ENCODE measurements at regions of chr3 and their contacts with region 1.

Region 1: GRCh38 chr3:112043603-112044201 is 9.2 kb downstream of the TMPRSS7 start:
- DNase-seq: peak; percentile 46 to 68
- H3K4me3 ChIP-seq: peak overlapping the region; percentile 3; the same call in 1 of the 2 replicates
- H3K27ac ChIP-seq: no peak overlapping the region
- H3K4me1 ChIP-seq: no peaks in the 10 kb centered on the region
- H3K27me3 ChIP-seq: no peaks in the 10 kb centered on the region
- CTCF ChIP-seq: peak; percentile 100

Region 2: DNA sequence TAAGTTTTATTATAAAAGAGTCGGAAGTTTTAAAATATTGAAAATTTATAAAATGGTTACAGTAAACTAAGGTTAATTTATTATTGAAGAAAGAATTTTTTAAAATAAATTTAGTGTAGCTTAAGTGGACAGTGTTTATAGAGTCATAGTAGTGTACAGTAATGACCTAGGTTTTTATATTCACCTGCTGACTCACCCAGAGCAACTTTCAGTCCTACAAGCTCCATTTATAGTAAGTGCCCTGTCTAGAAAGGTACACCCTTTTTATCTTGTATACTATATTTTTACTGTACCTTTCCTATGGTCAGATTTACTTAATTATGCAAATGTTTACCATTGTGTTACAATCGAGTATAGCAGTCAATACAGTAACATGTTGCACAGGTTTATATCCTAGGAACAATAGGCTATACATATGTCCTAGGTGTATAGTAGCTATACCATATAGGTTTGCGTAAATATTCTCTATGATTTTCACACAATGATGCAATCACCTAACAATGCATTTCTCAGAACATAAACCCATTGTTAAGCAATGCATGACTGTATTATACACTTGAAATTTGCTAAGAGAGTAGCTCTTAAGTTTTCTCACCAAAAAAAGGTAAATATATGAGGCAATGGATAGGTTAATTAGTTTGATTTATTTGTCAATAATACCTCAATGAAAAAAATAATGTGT is 608.6 kb before region 1 on chr3:
- CTCF ChIA-PET with region 1: no interaction called
- POLR2A ChIA-PET with region 1: no interaction called
- intact Hi-C with region 1: no loop called
- DNase-seq: no peak
- H3K4me3 ChIP-seq: no peak overlapping the region
- H3K27ac ChIP-seq: no peak overlapping the region
- H3K4me1 ChIP-seq: no peaks in the 10 kb centered on the region
- H3K27me3 ChIP-seq: no peaks in the 10 kb centered on the region
- CTCF ChIP-seq: no peak

Region 3: DNA sequence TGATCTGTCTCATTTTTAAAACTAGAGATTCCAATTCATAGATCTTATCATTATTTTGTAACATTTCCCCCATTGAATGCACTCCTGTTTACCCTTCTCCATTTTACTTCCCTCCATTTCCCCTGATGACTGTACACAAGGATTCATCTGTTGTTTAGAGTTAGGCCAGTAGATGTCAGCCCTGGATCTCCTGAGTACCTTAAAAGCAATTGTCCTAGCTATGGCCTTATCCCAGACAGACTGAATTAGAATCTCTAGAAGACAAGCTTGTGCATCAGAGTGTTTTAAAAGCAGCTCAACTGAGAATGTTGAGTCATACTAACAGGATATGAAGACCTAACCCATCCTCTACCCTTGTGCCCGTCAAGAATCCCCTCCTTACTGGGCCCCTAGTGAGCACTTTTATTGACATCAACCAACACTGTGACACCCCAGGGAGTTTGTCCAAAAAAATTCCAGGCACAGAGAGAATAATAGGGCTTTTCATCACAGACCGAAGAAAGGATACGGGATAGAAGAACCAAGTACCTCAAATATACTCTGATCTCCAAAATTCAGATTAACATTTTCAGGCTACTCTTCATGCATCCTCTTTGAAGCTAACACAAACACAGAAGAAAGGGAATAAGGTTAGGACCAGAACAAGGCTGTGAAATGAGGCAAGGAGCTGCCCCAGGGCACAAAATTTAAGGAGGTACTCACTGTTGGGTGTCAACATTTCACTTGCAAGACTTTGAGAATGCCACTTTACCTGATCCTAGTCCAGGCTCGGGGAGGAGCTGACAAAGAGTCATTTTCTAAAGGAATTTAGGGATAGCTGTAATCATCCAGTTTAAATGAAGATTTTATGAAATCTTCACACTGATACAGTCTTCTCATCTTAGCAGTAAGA is 465.7 kb before region 1 on chr3:
- CTCF ChIA-PET with region 1: no interaction called
- POLR2A ChIA-PET with region 1: interaction called, 3 read pairs
- intact Hi-C with region 1: loop called (anchors 10 kb)
- DNase-seq: peak; percentile 40 to 79
- H3K4me3 ChIP-seq: no peak overlapping the region
- H3K27ac ChIP-seq: no peak overlapping the region
- H3K4me1 ChIP-seq: peaks cover 12% of the 10 kb centered on the region
- H3K27me3 ChIP-seq: no peaks in the 10 kb centered on the region
- CTCF ChIP-seq: peak; percentile 80

Region 4: DNA sequence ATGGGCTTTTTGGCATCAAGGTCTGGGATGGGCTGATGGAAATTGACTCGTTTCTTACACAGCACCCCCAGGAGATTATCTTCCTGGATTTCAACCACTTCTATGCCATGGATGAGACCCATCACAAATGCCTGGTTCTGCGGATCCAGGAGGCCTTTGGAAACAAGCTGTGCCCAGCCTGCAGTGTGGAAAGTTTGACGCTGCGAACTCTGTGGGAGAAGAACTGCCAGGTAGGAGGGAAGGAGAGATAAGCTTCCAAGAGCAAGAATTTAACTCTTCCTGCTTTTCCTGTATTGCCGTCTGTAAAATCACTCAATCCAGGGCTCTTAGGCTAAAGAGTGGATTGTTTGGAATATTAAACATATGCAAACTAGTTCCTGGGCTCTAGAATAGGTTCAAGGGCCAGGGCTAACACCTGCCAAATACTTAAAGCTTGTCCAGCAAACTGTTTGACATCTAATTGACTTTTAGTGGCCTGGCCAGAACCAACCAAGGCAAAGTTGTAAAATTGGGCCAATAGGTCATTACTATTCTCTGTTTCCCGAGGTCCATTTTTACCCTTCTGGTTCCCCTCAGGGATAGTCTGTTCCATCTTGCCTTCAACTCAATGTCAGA is 335.4 kb before region 1 on chr3:
- CTCF ChIA-PET with region 1: interaction called, 17 read pairs
- POLR2A ChIA-PET with region 1: interaction called, 17 read pairs
- intact Hi-C with region 1: no loop called
- DNase-seq: no peak
- H3K4me3 ChIP-seq: no peak overlapping the region
- H3K27ac ChIP-seq: no peak overlapping the region
- H3K4me1 ChIP-seq: no peaks in the 10 kb centered on the region
- H3K27me3 ChIP-seq: no peaks in the 10 kb centered on the region
- CTCF ChIP-seq: no peak

Region 5: DNA sequence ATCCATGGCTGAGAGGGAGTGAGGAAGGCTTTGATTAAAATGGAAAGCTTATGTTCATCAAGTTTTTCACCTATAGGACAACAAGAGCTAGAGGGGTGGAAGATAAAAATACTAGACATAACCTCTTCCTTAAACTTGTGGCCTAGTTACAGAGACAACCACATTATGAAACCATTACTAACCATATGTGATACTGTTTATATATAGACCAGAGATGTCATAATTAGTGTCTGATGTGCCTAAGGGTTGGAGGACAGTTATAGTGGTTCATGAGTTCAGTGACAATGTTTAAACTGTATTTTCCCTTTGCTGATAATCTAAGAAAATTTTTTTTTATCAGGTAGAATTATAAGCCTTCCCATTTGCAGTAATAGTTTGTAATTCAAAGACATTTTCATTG is 160.9 kb before region 1 on chr3:
- CTCF ChIA-PET with region 1: no interaction called
- POLR2A ChIA-PET with region 1: no interaction called
- intact Hi-C with region 1: no loop called
- DNase-seq: no peak
- H3K4me3 ChIP-seq: no peak overlapping the region
- H3K27ac ChIP-seq: no peak overlapping the region
- H3K4me1 ChIP-seq: no peaks in the 10 kb centered on the region
- H3K27me3 ChIP-seq: no peaks in the 10 kb centered on the region
- CTCF ChIP-seq: no peak

Region 6: GRCh38 chr3:111978493-111979433 is 64.9 kb before region 1 on chr3 and contains the start of gene ABHD10:
- CTCF ChIA-PET with region 1: interaction called, 4 read pairs
- POLR2A ChIA-PET with region 1: interaction called, 17 read pairs
- intact Hi-C with region 1: no loop called
- DNase-seq: peak; percentile 95 to 96
- H3K4me3 ChIP-seq: peak within 1 kb of the TSS; percentile 80
- H3K27ac ChIP-seq: peak within 1 kb of the TSS; percentile 62
- H3K4me1 ChIP-seq: peaks cover 30% of the 10 kb centered on the region
- H3K27me3 ChIP-seq: no peaks in the 10 kb centered on the region
- CTCF ChIP-seq: no peak
- total RNA-seq, gene ABHD10: 57.4 and 57.6 TPM in 2 replicates

Region 7: GRCh38 chr3:111989061-111989678 is 54.5 kb before region 1 on chr3:
- CTCF ChIA-PET with region 1: interaction called, 15 read pairs
- POLR2A ChIA-PET with region 1: no interaction called
- intact Hi-C with region 1: loop called (anchors 2 kb)
- DNase-seq: peak in 1 of 2 experiments; percentile 61
- H3K4me3 ChIP-seq: no peak overlapping the region
- H3K27ac ChIP-seq: no peak overlapping the region
- H3K4me1 ChIP-seq: no peaks in the 10 kb centered on the region
- H3K27me3 ChIP-seq: no peaks in the 10 kb centered on the region
- CTCF ChIP-seq: peak; percentile 96

Region 8: DNA sequence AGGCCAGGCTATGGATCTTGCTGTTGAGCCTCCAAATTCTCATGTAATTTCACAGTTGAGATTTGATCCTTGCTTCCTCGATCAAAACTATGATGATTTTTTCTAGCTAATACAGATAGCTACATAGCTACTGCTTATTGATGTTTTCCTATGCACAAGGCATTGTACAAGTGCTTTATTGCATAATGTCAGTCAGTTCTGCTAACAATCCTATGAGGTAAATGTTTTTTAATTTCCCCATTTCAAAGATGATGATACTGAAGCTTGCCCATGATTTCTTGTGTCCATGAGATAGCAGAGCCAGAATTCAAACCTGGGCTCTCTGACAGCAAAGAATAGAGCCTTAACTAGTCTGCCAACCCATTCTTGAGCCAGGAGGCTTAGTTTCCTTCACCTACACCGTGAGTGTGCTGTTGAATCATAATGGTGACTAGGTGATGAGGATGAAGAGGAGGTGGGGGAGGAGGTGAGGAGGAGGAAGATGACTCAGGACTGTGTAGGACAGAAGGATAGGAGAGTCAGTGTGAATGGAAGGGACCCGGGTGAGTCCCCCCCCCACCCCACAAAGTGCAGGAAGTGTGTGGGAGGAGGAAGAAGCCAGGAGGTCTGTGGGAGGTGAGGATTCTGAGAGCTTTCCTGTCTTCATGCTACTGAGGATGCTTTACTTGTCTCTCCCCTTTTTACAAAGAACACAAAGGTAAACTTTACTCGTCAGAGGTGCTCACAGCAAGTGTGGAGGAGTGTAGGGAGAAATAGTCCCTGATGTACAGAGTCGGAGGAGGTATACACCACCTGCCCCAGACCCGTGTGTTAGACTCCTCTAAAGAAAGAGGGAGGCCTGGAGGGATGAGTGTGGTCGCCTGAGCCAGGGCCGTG is 41.4 kb before region 1 on chr3:
- CTCF ChIA-PET with region 1: no interaction called
- POLR2A ChIA-PET with region 1: no interaction called
- intact Hi-C with region 1: no loop called
- DNase-seq: peak in 1 of 2 experiments; percentile 37
- H3K4me3 ChIP-seq: no peak overlapping the region
- H3K27ac ChIP-seq: no peak overlapping the region
- H3K4me1 ChIP-seq: peaks cover 15% of the 10 kb centered on the region; the same call in 1 of the 2 replicates
- H3K27me3 ChIP-seq: no peaks in the 10 kb centered on the region
- CTCF ChIP-seq: no peak

Region 9: DNA sequence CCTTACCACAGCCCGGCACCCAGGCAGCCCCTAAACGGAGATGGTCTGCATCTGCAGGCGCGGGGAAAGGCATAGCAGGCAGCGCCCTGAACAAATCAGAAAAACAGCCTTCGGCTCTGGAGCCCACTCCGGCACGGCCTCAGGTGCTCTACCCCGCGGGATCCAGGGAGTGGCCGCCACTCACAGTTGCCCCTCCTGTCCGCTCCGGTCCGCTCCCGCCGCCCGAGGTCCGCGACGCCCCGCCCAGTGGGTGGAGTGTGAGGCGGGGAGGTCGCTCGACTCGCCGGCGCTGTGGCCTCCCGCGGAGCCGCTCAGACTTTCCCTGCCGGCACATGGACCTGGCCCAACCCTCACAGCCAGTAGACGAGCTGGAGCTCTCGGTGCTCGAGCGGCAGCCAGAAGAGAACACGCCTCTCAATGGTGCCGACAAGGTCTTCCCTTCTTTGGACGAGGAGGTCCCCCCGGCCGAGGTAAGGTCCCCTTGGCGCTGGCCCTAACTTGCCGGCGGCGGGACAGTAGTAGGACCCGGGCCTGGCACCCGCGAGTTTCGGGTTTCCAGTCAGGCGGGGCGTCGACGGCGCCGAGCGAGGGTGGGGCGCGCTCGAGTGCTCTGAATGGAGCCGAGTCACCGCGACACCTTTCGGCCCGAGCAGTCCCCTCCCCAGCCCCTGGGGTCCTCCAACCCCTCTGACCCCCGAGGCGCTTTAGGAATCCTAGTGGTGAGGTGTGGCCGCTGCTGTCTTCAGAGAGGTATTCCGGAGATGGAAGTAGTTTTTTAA is 42.6 kb after region 1 on chr3 and contains the start of gene C3orf52:
- CTCF ChIA-PET with region 1: no interaction called
- POLR2A ChIA-PET with region 1: no interaction called
- intact Hi-C with region 1: loop called (anchors 2 kb)
- DNase-seq: peak; percentile 87 to 94
- H3K4me3 ChIP-seq: peak within 1 kb of the TSS; percentile 80
- H3K27ac ChIP-seq: peak within 1 kb of the TSS; percentile 81
- H3K4me1 ChIP-seq: peaks cover 47% of the 10 kb centered on the region
- H3K27me3 ChIP-seq: no peaks in the 10 kb centered on the region
- CTCF ChIP-seq: no peak; the same call in 1 of the 2 replicates
- total RNA-seq, gene C3orf52: 7.5 and 9.9 TPM in 2 replicates